Activated CD4-positive, alpha-beta T cell treated with anti-CD3 and anti-CD28 coated beads for 36 hours (primary cell): ENCODE measurements at regions of chr9 and their contacts with region 1.

Region 1: DNA sequence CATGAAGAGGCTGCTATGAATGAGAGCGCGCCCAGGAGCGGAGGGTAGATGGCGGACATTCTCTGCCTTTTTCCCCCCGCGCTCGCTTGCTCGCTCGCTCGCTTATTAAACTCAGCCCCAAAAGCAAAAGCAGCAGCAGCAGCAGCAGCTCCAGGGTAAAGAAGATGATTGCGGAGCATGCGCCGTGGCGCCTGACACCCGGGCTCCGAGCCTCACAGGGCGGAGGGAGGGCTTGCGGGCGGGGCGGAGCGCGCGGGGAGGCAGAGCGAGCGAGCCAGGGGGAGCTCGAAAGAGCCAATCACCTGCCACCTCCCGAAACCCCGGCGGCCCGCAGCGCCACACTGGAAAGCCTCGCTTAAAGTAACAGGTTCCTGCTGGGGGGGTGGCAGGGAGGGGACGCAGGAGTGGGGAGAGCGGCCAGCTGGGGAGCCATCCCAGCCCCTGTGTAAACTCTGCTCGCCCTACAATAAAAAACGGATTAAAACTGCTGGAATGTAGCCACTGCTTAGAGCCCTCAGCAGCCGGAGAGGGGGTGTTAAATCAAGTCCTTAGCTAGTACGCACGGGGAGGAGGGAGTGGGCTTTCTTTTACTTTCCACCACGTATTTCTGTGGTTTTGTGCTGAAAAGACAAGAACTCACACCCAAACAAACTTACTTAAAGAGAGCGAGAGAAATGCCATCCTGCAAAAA is at the start of gene MLLT3:
- DNase-seq: peak; percentile 98
- ATAC-seq: peak; percentile 86
- H3K4me3 Mint-ChIP-seq: peak within 1 kb of the TSS; percentile 98
- H3K27ac Mint-ChIP-seq: peak within 1 kb of the TSS; percentile 99
- H3K4me1 Mint-ChIP-seq: peaks cover 36% of the 10 kb centered on the region
- H3K27me3 Mint-ChIP-seq: no peaks in the 10 kb centered on the region
- total RNA-seq, gene MLLT3: 42.5 to 49.2 TPM

Region 2: DNA sequence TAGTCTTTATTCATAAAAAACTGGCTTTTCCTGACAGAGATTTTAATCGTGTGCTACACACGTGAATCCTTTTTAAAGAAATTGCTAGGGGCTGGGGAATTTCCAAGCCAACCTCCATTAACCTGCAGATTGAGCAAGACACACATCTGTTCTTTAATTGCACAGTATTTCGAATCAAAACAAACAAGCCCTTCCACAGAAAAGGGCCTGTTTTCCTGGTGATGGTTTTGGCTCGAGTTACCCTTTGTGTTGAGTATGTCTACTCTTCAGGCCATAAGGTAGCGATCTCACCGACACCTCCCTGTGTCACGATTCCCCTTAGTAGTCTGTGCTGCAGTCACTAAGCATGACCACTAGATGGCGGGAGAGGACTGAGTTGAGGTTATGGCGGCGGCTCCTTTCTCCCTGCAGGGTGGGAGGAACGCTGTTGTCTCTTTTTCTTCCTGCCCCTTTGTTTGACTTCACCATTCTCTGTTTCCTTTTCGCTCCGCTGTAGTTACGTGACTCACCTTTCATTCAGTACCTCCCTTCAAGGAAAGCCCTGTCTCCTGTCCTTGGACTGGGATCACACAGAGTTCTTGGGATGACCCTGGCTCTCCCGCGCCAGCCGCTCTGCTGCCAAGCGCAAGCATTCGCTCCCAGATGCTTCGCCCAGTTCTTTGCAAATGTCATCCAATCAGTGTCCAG is 696.5 kb before region 1 on chr9:
- CTCF ChIA-PET with region 1: no interaction called
- POLR2A ChIA-PET with region 1: no interaction called
- intact Hi-C with region 1: loop called (anchors 1 kb)
- DNase-seq: peak; percentile 87
- ATAC-seq: peak; percentile 98
- H3K4me3 Mint-ChIP-seq: peak overlapping the region; percentile 60
- H3K27ac Mint-ChIP-seq: peak overlapping the region; percentile 22
- H3K4me1 Mint-ChIP-seq: peaks cover 15% of the 10 kb centered on the region
- H3K27me3 Mint-ChIP-seq: peaks cover 16% of the 10 kb centered on the region

Region 3: GRCh38 chr9:20242510-20243189 is 379.8 kb before region 1 on chr9:
- CTCF ChIA-PET with region 1: no interaction called
- POLR2A ChIA-PET with region 1: no interaction called
- intact Hi-C with region 1: loop called in 1 of 2 experiments (anchors 5 kb)
- DNase-seq: peak; percentile 30
- ATAC-seq: peak; percentile 82
- H3K4me3 Mint-ChIP-seq: peak overlapping the region; percentile 4
- H3K27ac Mint-ChIP-seq: no peak overlapping the region
- H3K4me1 Mint-ChIP-seq: peaks cover 44% of the 10 kb centered on the region
- H3K27me3 Mint-ChIP-seq: peaks cover 19% of the 10 kb centered on the region

Region 4: GRCh38 chr9:20331095-20331685 is 291.3 kb before region 1 on chr9:
- CTCF ChIA-PET with region 1: no interaction called
- POLR2A ChIA-PET with region 1: no interaction called
- intact Hi-C with region 1: no loop called
- DNase-seq: no peak
- ATAC-seq: peak; percentile 93
- H3K4me3 Mint-ChIP-seq: no peak overlapping the region
- H3K27ac Mint-ChIP-seq: no peak overlapping the region
- H3K4me1 Mint-ChIP-seq: peaks cover 13% of the 10 kb centered on the region
- H3K27me3 Mint-ChIP-seq: no peaks in the 10 kb centered on the region

Region 5: GRCh38 chr9:20369391-20369790 is 253.1 kb before region 1 on chr9:
- CTCF ChIA-PET with region 1: no interaction called
- POLR2A ChIA-PET with region 1: no interaction called
- intact Hi-C with region 1: no loop called
- DNase-seq: no peak
- ATAC-seq: no peak
- H3K4me3 Mint-ChIP-seq: no peak overlapping the region
- H3K27ac Mint-ChIP-seq: no peak overlapping the region
- H3K4me1 Mint-ChIP-seq: peaks cover 46% of the 10 kb centered on the region
- H3K27me3 Mint-ChIP-seq: no peaks in the 10 kb centered on the region

Region 6: GRCh38 chr9:20508242-20508641 is 114.2 kb before region 1 on chr9:
- CTCF ChIA-PET with region 1: no interaction called
- POLR2A ChIA-PET with region 1: no interaction called
- intact Hi-C with region 1: loop called (anchors 5 kb)
- DNase-seq: no peak
- ATAC-seq: peak; percentile 79
- H3K4me3 Mint-ChIP-seq: peak overlapping the region; percentile 27
- H3K27ac Mint-ChIP-seq: peak overlapping the region; percentile 22
- H3K4me1 Mint-ChIP-seq: peaks cover 81% of the 10 kb centered on the region
- H3K27me3 Mint-ChIP-seq: no peaks in the 10 kb centered on the region

Region 7: GRCh38 chr9:20611751-20612287 is 10.7 kb before region 1 on chr9:
- CTCF ChIA-PET with region 1: interaction called, 10 read pairs
- POLR2A ChIA-PET with region 1: interaction called, 5 read pairs
- intact Hi-C with region 1: loop called in 1 of 2 experiments (anchors 1 kb)
- DNase-seq: no peak
- ATAC-seq: no peak
- H3K4me3 Mint-ChIP-seq: no peak overlapping the region
- H3K27ac Mint-ChIP-seq: peak overlapping the region; percentile 40
- H3K4me1 Mint-ChIP-seq: peaks cover 77% of the 10 kb centered on the region
- H3K27me3 Mint-ChIP-seq: no peaks in the 10 kb centered on the region

Region 8: DNA sequence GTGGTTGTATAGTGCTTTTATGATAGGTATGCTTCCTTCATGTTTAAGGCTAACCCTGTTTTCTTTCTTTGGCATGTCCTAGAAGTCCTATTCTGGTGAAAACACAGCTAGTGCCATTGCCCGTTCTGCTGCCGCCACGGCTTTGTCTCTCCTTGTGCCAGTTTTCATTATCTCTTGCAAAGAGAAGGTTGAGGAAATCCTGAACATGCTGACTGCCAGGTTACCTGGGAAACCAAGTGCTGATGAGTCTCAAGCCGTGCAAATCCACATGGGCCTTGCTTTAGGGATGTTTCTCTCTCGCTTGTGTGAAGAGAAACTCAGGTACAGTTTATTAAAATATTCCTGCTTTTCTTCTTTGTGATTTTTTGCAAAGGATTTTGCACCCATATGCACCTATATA is 306.8 kb after region 1 on chr9:
- CTCF ChIA-PET with region 1: interaction called, 4 read pairs
- POLR2A ChIA-PET with region 1: no interaction called
- intact Hi-C with region 1: loop called in 1 of 2 experiments (anchors 5 kb)
- DNase-seq: no peak
- ATAC-seq: no peak
- H3K4me3 Mint-ChIP-seq: no peak overlapping the region
- H3K27ac Mint-ChIP-seq: no peak overlapping the region
- H3K4me1 Mint-ChIP-seq: peaks cover 17% of the 10 kb centered on the region
- H3K27me3 Mint-ChIP-seq: no peaks in the 10 kb centered on the region

Region 9: DNA sequence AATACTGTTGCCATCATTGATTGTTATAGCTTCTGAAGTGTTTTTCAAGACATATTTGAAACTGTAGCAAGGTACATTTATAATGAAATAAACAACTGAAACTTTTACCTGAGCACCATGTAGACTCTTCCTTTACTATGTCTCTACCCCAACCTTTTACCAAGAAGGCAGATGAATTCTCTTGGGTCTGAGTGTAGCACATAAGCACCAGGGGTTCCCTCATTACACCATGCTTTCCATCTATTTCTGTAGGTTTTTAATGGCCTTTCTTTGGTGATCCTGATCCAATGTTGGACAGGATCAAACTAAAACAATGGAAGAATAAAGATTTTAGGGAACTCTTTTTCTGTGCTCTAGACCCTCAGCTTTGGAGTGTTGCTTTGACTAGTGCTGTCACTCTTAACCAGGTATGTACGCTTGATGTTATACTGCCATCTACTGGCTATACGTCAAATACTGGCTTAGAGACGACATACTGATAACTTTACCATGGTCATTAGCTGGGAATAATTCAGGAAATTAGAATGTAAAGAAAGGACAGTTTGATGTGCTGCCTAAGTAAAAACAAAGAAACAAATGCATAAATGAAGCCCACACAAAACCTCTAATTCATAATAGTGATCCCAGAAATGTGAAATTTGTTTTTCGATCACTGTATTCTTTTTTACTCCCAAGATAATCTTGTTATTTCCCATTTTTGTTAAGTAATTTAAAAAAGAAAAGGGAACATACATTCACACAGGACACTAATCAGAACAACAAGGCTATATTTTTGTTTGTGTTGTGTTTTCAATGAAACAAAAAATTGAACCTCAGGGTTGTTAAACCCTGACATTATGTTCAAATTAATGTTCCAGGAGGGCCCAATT is 488.5 kb after region 1 on chr9:
- CTCF ChIA-PET with region 1: interaction called, 30 read pairs
- POLR2A ChIA-PET with region 1: no interaction called
- intact Hi-C with region 1: loop called (anchors 1 to 2 kb)
- DNase-seq: no peak
- ATAC-seq: peak; percentile 75
- H3K4me3 Mint-ChIP-seq: no peak overlapping the region
- H3K27ac Mint-ChIP-seq: no peak overlapping the region
- H3K4me1 Mint-ChIP-seq: no peaks in the 10 kb centered on the region
- H3K27me3 Mint-ChIP-seq: no peaks in the 10 kb centered on the region